ENCODE measurements at regions of chr4 and their contacts with region 1.

Region 1: GRCh38 chr4:152500800-152501434 is 35.0 kb downstream of the FBXW7 start:
- DNase-seq: peak; percentile 22
- H3K4me3 Mint-ChIP-seq: no peak overlapping the region
- H3K27ac Mint-ChIP-seq: no peak overlapping the region
- H3K4me1 Mint-ChIP-seq: peaks cover 22% of the 10 kb centered on the region
- H3K27me3 Mint-ChIP-seq: no peaks in the 10 kb centered on the region

Region 2: DNA sequence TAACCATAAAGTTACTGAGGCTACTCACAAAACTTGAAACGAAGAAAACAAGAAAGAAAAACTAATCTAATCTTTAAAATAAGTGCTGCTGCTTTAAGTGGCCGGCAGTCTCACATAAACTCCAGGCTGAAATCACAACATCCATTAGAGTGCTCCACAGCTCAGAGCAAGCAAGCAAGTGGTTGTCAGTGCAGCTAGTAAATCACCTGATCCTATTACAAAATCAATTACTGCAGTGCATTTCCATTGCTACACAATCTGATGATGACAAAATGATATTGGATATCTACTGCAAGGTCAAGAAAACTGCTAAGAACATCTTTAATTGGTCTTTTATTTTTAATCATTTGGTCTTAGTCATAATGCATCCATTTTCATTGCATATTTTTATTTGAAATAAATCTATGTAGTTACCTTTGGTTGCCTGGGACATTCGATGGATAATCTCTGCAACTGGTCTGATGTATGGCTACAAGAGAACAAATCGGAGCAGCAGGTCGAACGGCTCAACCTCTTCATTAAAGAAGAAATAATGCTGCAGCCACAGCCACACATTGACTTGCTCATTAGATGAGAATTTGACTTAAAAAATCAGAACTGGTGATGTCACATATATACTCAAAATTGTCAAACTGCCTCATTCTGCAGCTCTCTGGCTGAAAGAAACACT is 52.7 kb before region 1 on chr4:
- CTCF ChIA-PET with region 1: interaction called, 12 read pairs
- POLR2A ChIA-PET with region 1: no interaction called
- intact Hi-C with region 1: no loop called
- DNase-seq: no peak
- H3K4me3 Mint-ChIP-seq: no peak overlapping the region
- H3K27ac Mint-ChIP-seq: no peak overlapping the region
- H3K4me1 Mint-ChIP-seq: peaks cover 11% of the 10 kb centered on the region
- H3K27me3 Mint-ChIP-seq: no peaks in the 10 kb centered on the region

Region 3: DNA sequence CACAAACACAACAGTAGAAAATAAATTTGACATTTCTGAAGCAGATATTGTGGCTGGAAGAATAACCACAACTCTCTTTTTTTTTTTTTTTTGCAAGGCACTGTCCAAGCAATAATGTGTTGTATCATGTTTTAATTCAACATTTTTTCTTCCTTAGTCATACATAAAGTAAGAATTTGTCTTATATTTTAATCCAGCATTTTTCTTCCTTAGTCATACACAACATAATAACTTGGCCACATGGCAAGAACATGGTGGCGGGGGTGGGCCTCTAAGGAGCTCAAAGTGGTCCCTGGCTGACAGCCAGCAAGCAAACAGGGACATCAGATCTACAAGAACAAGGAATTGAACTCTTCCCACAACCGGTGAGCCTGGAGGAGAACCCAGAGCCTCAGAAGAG is 14.8 kb after region 1 on chr4:
- CTCF ChIA-PET with region 1: interaction called, 43 read pairs
- POLR2A ChIA-PET with region 1: interaction called, 3 read pairs
- intact Hi-C with region 1: no loop called
- DNase-seq: no peak
- H3K4me3 Mint-ChIP-seq: no peak overlapping the region
- H3K27ac Mint-ChIP-seq: no peak overlapping the region
- H3K4me1 Mint-ChIP-seq: peaks cover 44% of the 10 kb centered on the region
- H3K27me3 Mint-ChIP-seq: no peaks in the 10 kb centered on the region

Region 4: DNA sequence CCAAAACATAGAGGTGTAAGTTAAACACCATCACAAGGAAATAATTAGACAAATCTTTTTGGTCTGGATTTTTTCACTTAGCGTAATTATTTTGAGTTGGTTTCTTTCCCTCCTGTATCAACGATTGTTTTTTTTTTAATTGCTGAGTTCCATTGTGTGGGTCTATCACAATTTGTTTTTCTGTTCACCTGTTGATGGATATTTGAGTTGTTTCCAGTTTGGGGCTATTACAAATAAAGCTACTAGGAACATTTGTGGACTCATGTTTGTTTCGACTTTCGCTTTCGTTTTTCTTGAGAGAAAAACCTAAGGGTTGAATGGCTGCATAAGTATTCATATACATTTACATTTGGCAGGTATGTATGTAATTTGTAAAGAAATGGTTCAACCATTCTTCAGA is 55.4 kb after region 1 on chr4:
- CTCF ChIA-PET with region 1: interaction called, 21 read pairs
- POLR2A ChIA-PET with region 1: interaction called, 4 read pairs
- intact Hi-C with region 1: no loop called
- DNase-seq: no peak
- H3K4me3 Mint-ChIP-seq: peak overlapping the region; percentile 57
- H3K27ac Mint-ChIP-seq: peak overlapping the region; percentile 77
- H3K4me1 Mint-ChIP-seq: peaks cover 54% of the 10 kb centered on the region
- H3K27me3 Mint-ChIP-seq: no peaks in the 10 kb centered on the region

Region 5: DNA sequence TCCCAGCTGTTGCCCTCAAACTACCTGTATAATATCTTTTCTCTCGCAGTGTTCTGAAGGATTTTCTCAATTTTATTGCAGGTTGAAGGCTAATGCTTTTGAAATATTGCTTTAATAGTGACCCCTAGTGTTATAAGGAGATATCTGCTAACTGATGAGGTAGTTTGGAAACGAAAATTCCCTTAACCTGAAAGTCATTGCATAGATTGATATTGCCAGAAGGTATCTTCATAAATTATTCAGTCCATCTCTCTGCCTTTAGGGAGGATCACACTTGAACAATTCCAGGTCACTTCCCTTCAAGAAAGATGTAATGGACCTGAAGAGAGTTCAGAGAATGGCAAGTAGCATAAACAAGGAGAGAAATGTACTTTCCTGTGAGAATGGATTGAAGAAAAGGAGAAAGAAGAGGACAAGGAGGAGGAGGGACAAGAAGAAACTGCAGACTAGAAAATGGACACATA is 234.5 kb after region 1 on chr4:
- CTCF ChIA-PET with region 1: interaction called, 48 read pairs
- POLR2A ChIA-PET with region 1: no interaction called
- intact Hi-C with region 1: loop called (anchors 1 kb)
- DNase-seq: no peak
- H3K4me3 Mint-ChIP-seq: no peak overlapping the region
- H3K27ac Mint-ChIP-seq: no peak overlapping the region
- H3K4me1 Mint-ChIP-seq: peaks cover 3% of the 10 kb centered on the region
- H3K27me3 Mint-ChIP-seq: peaks cover 3% of the 10 kb centered on the region